ENCODE measurements at regions of chr19 and their contacts with region 1.

Region 1: GRCh38 chr19:4139614-4140236 is 13.7 kb upstream of the CREB3L3 start:
- DNase-seq: peak; percentile 78
- H3K4me3 Mint-ChIP-seq: no peak overlapping the region
- H3K27ac Mint-ChIP-seq: no peak overlapping the region
- H3K4me1 Mint-ChIP-seq: no peaks in the 10 kb centered on the region
- H3K27me3 Mint-ChIP-seq: no peaks in the 10 kb centered on the region
- CTCF ChIP-seq: peak; percentile 73

Region 2: GRCh38 chr19:4077882-4078614 is 61.7 kb before region 1 on chr19:
- CTCF ChIA-PET with region 1: interaction called, 5 read pairs
- POLR2A ChIA-PET with region 1: no interaction called
- intact Hi-C with region 1: loop called (anchors 10 kb)
- DNase-seq: peak; percentile 36
- H3K4me3 Mint-ChIP-seq: peak overlapping the region; percentile 36
- H3K27ac Mint-ChIP-seq: no peak overlapping the region
- H3K4me1 Mint-ChIP-seq: no peaks in the 10 kb centered on the region
- H3K27me3 Mint-ChIP-seq: no peaks in the 10 kb centered on the region
- CTCF ChIP-seq: no peak

Region 3: GRCh38 chr19:4123615-4124568 is 15.8 kb before region 1 on chr19 and contains the start of gene MAP2K2:
- CTCF ChIA-PET with region 1: interaction called, 15 read pairs
- POLR2A ChIA-PET with region 1: no interaction called
- intact Hi-C with region 1: no loop called
- DNase-seq: peak; percentile 92
- H3K4me3 Mint-ChIP-seq: peak within 1 kb of the TSS; percentile 86
- H3K27ac Mint-ChIP-seq: peak within 1 kb of the TSS; percentile 96
- H3K4me1 Mint-ChIP-seq: peaks cover 17% of the 10 kb centered on the region
- H3K27me3 Mint-ChIP-seq: no peaks in the 10 kb centered on the region
- CTCF ChIP-seq: no peak
- total RNA-seq, gene MAP2K2: 171 and 230 TPM in 2 replicates

Region 4: DNA sequence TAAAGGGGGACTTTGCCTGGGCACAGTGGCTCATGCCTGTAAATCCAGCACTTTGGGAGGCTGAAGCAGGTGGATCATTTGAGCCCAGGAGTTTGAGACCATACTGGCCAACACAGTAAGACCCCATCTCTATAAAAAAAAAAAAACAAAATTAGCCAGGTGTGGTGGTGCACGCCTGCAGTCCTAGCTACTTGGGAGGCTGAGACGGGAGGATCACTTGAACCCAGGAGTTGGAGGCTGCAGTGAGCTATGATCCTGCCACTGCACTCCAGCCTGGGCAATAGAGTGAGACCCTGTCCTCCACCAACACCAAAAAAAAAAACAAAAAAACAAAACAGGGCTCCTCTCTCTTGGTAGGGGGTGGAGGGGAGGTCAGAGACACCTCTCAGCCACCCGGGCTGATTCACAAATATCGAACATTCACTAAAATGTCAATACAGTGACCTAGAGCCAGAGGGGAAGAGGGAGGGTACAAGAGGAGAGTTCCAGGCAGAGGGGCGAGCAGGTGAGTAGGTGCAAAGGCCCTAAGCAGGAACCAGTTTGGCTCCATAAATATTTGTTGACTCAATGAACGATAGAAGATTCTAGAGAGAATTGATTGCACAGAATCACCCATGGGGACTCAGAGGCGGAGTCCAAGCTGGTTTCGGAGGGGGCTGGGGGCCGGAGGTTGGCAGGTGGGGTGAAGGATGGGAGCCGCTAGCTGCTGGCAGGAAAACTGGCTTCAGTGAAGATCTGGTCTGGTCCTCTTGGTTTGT is 12.7 kb after region 1 on chr19:
- CTCF ChIA-PET with region 1: interaction called, 13 read pairs
- POLR2A ChIA-PET with region 1: interaction called, 3 read pairs
- intact Hi-C with region 1: no loop called
- DNase-seq: no peak
- H3K4me3 Mint-ChIP-seq: no peak overlapping the region
- H3K27ac Mint-ChIP-seq: no peak overlapping the region
- H3K4me1 Mint-ChIP-seq: no peaks in the 10 kb centered on the region
- H3K27me3 Mint-ChIP-seq: peaks cover 50% of the 10 kb centered on the region
- CTCF ChIP-seq: no peak

Region 5: DNA sequence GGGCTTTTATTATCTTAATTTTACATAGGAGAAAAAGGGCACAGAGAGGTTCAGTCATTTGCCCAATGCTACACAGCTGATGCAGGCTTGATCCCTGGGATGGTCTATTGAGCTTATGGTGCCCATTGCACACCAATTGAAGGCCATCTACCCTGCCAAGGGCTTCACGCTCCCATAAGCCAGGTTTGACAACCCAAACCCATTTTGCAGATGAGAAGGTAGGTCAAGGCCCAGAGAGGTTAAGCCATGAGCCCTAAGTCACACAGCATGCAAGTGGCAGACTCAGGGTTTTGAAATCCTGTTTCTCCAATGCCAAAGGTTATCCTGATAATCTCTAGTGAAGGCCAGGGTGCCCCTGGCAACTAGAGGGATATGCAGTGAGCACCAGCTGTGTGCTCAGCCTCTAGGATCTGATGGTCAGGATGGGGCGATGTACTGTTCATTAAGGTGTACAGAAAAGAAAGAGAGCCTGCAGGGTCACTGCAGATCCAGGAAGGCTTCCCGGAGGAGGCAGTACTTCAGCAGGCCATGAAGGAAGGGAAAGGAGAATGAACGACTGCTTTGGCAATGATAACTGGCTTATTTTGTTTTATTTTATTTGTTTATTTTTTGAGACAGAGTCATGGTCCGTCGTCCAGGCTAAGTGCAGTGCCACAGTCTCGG is 21.8 kb after region 1 on chr19:
- CTCF ChIA-PET with region 1: interaction called, 10 read pairs
- POLR2A ChIA-PET with region 1: no interaction called
- intact Hi-C with region 1: no loop called
- DNase-seq: no peak
- H3K4me3 Mint-ChIP-seq: no peak overlapping the region
- H3K27ac Mint-ChIP-seq: no peak overlapping the region
- H3K4me1 Mint-ChIP-seq: no peaks in the 10 kb centered on the region
- H3K27me3 Mint-ChIP-seq: peaks cover 3% of the 10 kb centered on the region
- CTCF ChIP-seq: no peak

Region 6: GRCh38 chr19:4186087-4186993 is 46.6 kb after region 1 on chr19:
- CTCF ChIA-PET with region 1: interaction called, 4 read pairs
- POLR2A ChIA-PET with region 1: no interaction called
- intact Hi-C with region 1: loop called (anchors 2 kb)
- DNase-seq: peak; percentile 86
- H3K4me3 Mint-ChIP-seq: no peak overlapping the region
- H3K27ac Mint-ChIP-seq: no peak overlapping the region
- H3K4me1 Mint-ChIP-seq: peaks cover 13% of the 10 kb centered on the region
- H3K27me3 Mint-ChIP-seq: no peaks in the 10 kb centered on the region
- CTCF ChIP-seq: peak; percentile 67

Region 7: DNA sequence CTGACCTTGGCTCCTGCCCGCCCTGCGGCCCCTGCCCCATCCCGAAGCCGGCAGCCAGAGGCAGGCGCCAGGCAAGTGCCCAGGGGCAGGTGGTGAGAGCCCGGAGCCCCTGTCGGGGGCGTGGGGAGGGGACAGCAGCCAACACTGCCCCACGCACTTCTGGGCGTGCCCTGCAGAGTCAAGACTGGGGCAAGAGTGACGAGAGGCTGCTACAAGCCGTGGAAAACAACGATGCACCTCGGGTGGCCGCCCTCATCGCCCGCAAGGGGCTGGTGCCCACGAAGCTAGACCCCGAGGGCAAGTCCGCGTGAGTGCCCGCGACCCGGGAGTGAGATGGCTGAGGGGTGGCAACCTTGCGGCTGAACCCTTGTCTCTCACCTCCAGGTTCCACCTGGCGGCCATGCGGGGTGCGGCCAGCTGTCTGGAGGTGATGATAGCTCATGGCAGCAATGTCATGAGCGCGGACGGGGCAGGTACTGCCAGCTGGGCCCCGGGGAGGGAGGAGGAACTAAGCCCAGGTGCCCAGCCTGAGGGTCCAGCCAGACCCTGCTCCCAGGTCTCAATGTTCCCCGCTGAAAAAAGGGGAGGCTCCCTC is 60.1 kb after region 1 on chr19:
- CTCF ChIA-PET with region 1: interaction called, 16 read pairs
- POLR2A ChIA-PET with region 1: no interaction called
- intact Hi-C with region 1: no loop called
- DNase-seq: no peak
- H3K4me3 Mint-ChIP-seq: no peak overlapping the region
- H3K27ac Mint-ChIP-seq: no peak overlapping the region
- H3K4me1 Mint-ChIP-seq: peaks cover 16% of the 10 kb centered on the region
- H3K27me3 Mint-ChIP-seq: peaks cover 53% of the 10 kb centered on the region
- CTCF ChIP-seq: no peak

Region 8: DNA sequence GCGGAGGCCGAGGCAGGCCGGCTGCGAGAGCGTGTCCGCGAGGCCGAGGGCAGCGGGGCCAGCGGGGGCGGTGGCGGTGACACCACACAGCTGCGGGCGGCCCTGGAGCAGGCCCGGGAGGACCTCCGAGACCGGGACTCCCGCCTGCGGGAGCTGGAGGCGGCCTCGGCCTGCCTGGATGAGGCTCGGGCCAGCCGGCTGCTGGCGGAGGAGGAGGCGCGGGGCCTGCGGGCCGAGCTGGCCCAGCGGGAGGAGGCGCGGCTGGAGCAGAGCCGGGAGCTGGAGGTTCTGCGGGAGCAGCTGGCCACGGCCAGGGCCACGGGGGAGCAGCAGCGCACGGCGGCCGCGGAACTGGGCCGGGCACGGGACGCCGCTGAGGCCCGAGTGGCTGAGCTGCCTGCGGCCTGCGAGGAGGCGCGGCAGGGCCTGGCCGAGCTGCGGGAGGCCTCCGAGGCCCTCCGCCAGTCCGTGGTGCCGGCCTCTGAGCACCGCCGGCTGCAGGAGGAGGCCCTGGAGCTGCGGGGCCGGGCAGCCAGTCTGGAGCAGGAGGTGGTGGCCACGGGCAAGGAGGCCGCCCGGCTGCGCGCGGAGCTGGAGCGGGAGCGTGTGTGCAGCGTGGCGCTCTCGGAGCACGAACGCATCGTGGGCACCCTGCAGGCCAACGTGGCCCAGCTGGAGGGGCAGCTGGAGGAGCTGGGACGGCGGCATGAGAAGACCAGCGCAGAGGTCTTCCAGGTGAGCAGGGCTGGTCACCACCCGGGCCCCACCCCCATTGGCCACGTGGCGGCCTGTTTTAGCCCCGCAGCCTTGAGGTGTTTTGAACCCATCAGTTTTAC is 77.9 kb after region 1 on chr19:
- CTCF ChIA-PET with region 1: no interaction called
- POLR2A ChIA-PET with region 1: no interaction called
- intact Hi-C with region 1: no loop called
- DNase-seq: no peak
- H3K4me3 Mint-ChIP-seq: no peak overlapping the region
- H3K27ac Mint-ChIP-seq: no peak overlapping the region
- H3K4me1 Mint-ChIP-seq: no peaks in the 10 kb centered on the region
- H3K27me3 Mint-ChIP-seq: peaks cover 22% of the 10 kb centered on the region
- CTCF ChIP-seq: no peak

Region 9: GRCh38 chr19:4449022-4449638 is 309.4 kb after region 1 on chr19:
- CTCF ChIA-PET with region 1: no interaction called
- POLR2A ChIA-PET with region 1: no interaction called
- intact Hi-C with region 1: no loop called
- DNase-seq: no peak
- H3K4me3 Mint-ChIP-seq: no peak overlapping the region
- H3K27ac Mint-ChIP-seq: no peak overlapping the region
- H3K4me1 Mint-ChIP-seq: no peaks in the 10 kb centered on the region
- H3K27me3 Mint-ChIP-seq: no peaks in the 10 kb centered on the region
- CTCF ChIP-seq: no peak

Measured in MCF 10A (cell line).